ENCODE measurements at regions of chr19 and their contacts with region 1.

Region 1: DNA sequence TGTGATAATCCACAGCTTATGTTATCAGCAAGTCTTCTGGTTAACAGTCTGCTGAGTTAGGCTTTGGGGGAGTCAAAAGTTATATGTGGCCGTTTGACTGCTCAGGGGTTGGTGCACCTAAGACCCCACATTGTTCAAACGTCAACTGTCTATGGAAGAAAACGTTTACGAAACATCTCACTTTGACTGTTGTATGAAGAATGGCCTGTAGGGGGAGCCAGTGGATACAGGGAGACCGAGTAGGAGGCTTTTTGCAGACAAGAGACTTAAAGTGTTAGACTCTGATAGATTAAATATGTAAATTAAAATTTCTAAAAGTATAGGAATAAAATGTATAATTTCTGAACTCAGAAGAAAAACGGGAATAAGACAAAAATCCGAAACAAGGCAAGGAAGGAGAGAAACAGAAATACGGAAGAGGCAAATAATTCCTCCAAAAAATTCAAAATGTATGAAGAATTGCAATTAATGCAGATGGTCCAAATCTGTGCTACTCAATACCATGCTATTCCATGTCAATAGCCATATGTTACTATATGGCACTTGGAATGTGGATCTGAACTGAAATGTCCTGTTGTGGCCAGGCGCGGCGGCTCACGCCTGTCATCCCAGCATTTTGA is 37.8 kb downstream of the TNFSF14 start:
- DNase-seq: peak; percentile 66
- ATAC-seq: no peak; the same call in 2 of the 3 replicates
- H3K4me3 ChIP-seq: no peak overlapping the region
- H3K27ac ChIP-seq: no peak overlapping the region
- H3K4me1 ChIP-seq: no peaks in the 10 kb centered on the region
- H3K27me3 ChIP-seq: no peaks in the 10 kb centered on the region; a peak in 1 of 5 replicates
- CTCF ChIP-seq: peak; percentile 72
- EP300 ChIP-seq: no peak
- POLR2A ChIP-seq: no peak
- RAD21 ChIP-seq: no peak

Region 2: GRCh38 chr19:6516659-6517291 is 115.3 kb before region 1 on chr19:
- CTCF ChIA-PET with region 1: interaction called, 24 read pairs
- POLR2A ChIA-PET with region 1: no interaction called
- in situ Hi-C with region 1: loop called (anchors 5 kb)
- intact Hi-C with region 1: loop called (anchors 2 kb)
- DNase-seq: peak; percentile 60
- ATAC-seq: peak; percentile 96
- H3K4me3 ChIP-seq: peak overlapping the region; percentile 54 to 88 (median 78); a peak in 5 of 6 replicates
- H3K27ac ChIP-seq: no peak overlapping the region
- H3K4me1 ChIP-seq: peaks cover 46% of the 10 kb centered on the region
- H3K27me3 ChIP-seq: no peaks in the 10 kb centered on the region; a peak in 1 of 5 replicates
- CTCF ChIP-seq: peak; percentile 98
- EP300 ChIP-seq: no peak
- POLR2A ChIP-seq: no peak
- RAD21 ChIP-seq: peak; percentile 93

Measured in HepG2 (cell line).